SK-N-SH (cell line): ENCODE measurements at regions of chr1 and their contacts with region 1.

Region 1: DNA sequence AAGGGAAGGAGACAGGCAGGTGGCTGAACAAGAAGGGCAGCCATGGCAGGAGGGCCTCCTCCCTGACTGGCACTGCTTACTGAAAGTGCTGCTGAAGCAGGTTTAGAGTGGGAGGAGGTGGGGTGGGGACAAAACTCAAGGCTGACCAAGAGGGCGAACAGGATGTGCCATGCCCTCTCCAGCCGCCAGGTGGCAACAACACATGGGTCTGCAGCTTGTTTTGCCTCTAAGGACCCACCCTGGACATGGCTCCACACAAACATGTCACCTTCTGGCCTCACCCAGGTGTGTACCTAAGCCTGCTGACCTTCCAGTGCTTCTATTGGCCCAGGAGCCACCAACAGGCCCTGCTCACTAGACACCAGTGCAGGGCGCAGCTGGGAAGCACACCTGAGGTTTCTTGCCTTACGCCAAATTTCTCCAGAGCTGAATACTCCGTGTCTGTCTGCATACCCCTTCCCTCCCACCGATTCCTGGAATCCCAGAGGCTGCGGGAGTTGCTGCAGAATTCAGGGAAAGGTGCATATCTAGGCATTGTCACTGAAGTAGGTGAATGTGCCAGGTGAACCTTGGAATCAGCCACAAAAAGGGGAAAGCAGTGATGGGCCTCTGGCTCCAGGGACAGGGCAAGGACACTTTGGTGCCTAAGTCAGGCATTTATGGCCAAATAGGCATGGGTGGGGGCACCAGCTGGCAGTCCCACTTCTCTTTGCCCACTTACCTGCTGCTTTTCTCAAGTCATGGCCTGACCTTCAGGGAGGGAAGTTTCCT is 5.3 kb downstream of the PSRC1 start:
- DNase-seq: peak; percentile 88
- H3K4me3 ChIP-seq: no peak overlapping the region; a peak in 1 of 4 replicates
- H3K27ac ChIP-seq: peak overlapping the region in 1 of 2 experiments; percentile 44; a peak in 2 of 4 replicates
- H3K4me1 ChIP-seq: peaks cover 15 to 38% of the 10 kb centered on the region in 2 experiments
- H3K27me3 ChIP-seq: no peaks in the 10 kb centered on the region
- CTCF ChIP-seq: peak; percentile 90
- EP300 ChIP-seq: no peak
- RAD21 ChIP-seq: peak; percentile 77

Region 2: DNA sequence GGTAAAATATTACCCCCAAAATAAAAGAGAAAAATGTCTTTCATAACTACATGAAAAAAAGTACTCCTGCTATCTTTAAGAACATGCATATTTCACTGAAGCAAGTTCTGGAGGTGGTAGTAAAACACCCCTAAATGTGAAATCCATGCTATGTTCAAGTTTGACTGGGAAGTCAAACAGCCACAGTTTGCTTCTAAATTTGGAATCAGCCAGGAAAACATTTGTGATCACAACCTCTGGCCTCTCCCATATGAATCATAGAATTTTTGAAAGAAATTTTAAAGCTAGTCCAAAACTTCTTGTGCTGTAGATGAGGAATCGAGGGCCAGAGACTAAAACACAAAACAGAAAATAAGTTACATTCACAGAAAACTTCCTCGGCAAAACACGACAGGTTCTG is 113.5 kb after region 1 on chr1:
- CTCF ChIA-PET with region 1: interaction called, 252 read pairs
- POLR2A ChIA-PET with region 1: no interaction called
- DNase-seq: no peak
- H3K4me3 ChIP-seq: no peak overlapping the region
- H3K27ac ChIP-seq: peak overlapping the region; percentile 44 to 53; a peak in 3 of 4 replicates
- H3K4me1 ChIP-seq: peaks cover 2 to 18% of the 10 kb centered on the region in 2 experiments; a peak in 2 of 4 replicates
- H3K27me3 ChIP-seq: no peaks in the 10 kb centered on the region
- CTCF ChIP-seq: no peak
- EP300 ChIP-seq: no peak
- RAD21 ChIP-seq: no peak